MCF 10A (cell line): ENCODE measurements at regions of chr3 and their contacts with region 1.

Region 1: DNA sequence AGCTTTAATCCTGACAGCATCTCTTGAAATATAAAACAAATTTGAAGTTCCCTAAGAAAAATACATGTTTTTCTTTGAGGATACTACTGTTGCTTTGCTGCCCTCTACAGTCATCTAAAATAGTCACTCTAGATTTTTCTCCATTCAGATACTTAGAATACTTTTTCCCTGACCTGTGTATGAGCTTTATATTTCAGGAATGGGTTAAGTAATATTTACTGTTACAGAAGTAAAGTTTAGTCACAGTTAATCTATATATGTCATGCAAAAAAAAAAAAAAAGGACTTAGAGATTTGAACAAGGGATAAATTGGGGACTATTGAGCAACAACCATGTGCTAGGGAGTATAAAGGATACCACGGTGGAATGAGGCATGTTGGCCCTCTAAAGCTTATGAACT is 8.8 kb downstream of the NECTIN3 start:
- DNase-seq: peak; percentile 61
- H3K4me3 Mint-ChIP-seq: no peak overlapping the region
- H3K27ac Mint-ChIP-seq: no peak overlapping the region
- H3K4me1 Mint-ChIP-seq: peaks cover 5% of the 10 kb centered on the region
- H3K27me3 Mint-ChIP-seq: no peaks in the 10 kb centered on the region
- CTCF ChIP-seq: peak; percentile 65

Region 2: GRCh38 chr3:109532257-109533216 is 1547.9 kb before region 1 on chr3:
- CTCF ChIA-PET with region 1: interaction called, 11 read pairs
- POLR2A ChIA-PET with region 1: no interaction called
- intact Hi-C with region 1: no loop called
- DNase-seq: peak; percentile 87
- H3K4me3 Mint-ChIP-seq: no peak overlapping the region
- H3K27ac Mint-ChIP-seq: no peak overlapping the region
- H3K4me1 Mint-ChIP-seq: no peaks in the 10 kb centered on the region
- H3K27me3 Mint-ChIP-seq: no peaks in the 10 kb centered on the region
- CTCF ChIP-seq: peak; percentile 57

Region 3: DNA sequence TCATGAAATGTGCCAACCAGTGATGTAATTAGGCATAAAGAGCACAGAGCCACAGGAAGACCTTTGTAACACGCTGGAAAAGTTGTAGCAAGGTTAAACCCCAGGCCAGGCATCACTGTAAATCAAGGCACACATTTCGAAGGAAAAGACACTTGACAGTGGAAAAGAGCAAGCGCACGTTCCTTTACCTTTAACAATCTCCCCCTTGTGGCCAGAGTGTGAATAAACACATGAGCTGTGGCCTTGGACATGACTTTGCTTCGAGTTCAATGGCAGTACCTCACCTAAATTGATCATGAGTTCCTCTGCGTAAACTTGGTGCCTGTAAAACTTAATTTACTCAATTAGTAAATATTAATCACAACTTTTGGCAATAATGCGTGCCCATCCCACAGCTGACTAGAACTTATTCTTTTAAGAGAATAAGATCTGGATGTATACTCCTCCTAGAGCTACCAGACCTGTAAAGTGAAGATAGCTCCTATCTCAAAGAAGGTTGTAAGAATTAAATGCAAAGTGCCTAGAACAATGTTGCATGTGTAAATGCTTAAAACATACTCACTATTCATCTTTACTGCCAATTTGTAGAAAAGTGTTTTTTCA is 765.8 kb before region 1 on chr3:
- CTCF ChIA-PET with region 1: interaction called, 45 read pairs
- POLR2A ChIA-PET with region 1: no interaction called
- intact Hi-C with region 1: loop called (anchors 1 kb)
- DNase-seq: peak; percentile 80
- H3K4me3 Mint-ChIP-seq: no peak overlapping the region
- H3K27ac Mint-ChIP-seq: no peak overlapping the region
- H3K4me1 Mint-ChIP-seq: no peaks in the 10 kb centered on the region
- H3K27me3 Mint-ChIP-seq: no peaks in the 10 kb centered on the region
- CTCF ChIP-seq: peak; percentile 64

Region 4: GRCh38 chr3:111338059-111338698 is 257.8 kb after region 1 on chr3:
- CTCF ChIA-PET with region 1: interaction called, 6 read pairs
- POLR2A ChIA-PET with region 1: no interaction called
- intact Hi-C with region 1: loop called (anchors 2 kb)
- DNase-seq: peak; percentile 78
- H3K4me3 Mint-ChIP-seq: no peak overlapping the region
- H3K27ac Mint-ChIP-seq: no peak overlapping the region
- H3K4me1 Mint-ChIP-seq: peaks cover 19% of the 10 kb centered on the region
- H3K27me3 Mint-ChIP-seq: no peaks in the 10 kb centered on the region
- CTCF ChIP-seq: peak; percentile 60

Region 5: GRCh38 chr3:111846717-111847116 is 766.3 kb after region 1 on chr3:
- CTCF ChIA-PET with region 1: no interaction called
- POLR2A ChIA-PET with region 1: no interaction called
- intact Hi-C with region 1: no loop called
- DNase-seq: peak; percentile 92
- H3K4me3 Mint-ChIP-seq: peak overlapping the region; percentile 9
- H3K27ac Mint-ChIP-seq: peak overlapping the region; percentile 37
- H3K4me1 Mint-ChIP-seq: peaks cover 33% of the 10 kb centered on the region
- H3K27me3 Mint-ChIP-seq: no peaks in the 10 kb centered on the region
- CTCF ChIP-seq: no peak